GM10248 (cell line): ENCODE measurements at regions of chr2 and their contacts with region 1.

Region 1: GRCh38 chr2:105369747-105370690 is 28.8 kb downstream of the FHL2 start:
- DNase-seq: peak; percentile 81
- CTCF ChIP-seq: peak; percentile 95

Region 2: DNA sequence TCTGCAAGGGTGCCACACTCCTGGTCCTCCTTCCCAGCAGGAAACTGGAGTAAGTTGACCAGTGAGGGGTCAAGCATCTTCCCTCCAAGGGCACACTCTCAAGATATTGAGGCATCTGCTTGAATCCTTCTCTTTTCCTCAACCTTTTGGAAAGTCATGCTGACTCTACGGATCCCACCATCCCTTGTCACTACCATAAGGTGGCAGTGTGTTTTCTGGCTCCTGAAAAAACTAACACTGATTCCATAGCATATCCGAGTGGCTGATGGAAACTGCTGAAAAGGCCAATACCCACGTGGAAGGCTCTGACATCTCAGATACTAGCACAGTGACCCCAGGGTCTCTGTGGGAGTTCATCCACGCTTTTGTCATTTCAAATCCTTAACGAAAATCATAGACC is 91.4 kb before region 1 on chr2:
- CTCF ChIA-PET with region 1: no interaction called
- POLR2A ChIA-PET with region 1: no interaction called
- DNase-seq: no peak
- CTCF ChIP-seq: no peak

Region 3: DNA sequence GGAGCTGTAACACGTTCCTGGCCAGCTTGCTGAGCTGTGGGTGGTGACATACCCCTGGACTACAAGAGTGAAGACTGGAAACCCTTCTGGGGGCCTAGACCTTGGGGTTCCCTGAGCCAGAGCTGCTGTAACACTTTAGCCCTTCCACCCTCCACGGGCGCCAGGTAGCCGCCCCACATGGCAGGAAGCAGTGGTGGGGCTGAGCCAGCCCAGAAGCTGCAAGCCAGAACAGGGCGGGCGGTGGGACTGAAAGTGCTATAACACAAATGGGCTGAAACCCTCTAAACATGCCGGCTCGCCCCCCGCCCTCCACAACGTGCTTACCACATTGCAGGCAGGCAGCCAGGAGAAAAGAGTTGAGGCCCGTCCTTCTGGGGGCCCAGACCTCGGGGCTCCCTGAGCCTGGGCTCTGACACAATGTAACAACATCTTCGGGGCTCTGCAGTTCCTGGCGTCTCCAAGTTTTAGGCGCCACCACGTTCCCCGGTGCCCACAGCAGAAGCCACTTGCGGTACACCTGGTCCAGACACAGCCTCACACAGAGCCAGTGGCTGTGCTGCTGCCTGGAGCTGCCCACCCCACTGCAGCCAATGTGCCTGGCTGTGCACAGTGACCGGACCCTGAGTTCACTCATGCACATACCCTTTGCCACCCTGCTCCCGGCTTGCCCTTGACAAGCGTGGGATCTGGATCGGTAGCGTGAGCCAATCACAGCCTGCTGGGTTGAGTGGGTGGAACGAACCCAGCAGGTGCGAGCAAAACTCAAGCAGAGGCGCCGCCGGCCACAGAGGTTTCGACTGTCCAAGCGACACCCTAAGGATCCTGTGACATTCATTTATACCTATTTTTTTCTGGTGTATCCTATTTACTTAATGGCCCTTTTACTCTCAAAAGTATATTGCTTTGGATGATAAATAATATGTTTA is 156.2 kb after region 1 on chr2:
- CTCF ChIA-PET with region 1: interaction called, 56 read pairs
- POLR2A ChIA-PET with region 1: no interaction called
- DNase-seq: no peak
- CTCF ChIP-seq: no peak

Region 4: GRCh38 chr2:105545730-105546627 is 176.0 kb after region 1 on chr2:
- CTCF ChIA-PET with region 1: interaction called, 20 read pairs
- POLR2A ChIA-PET with region 1: no interaction called
- DNase-seq: peak; percentile 75
- CTCF ChIP-seq: peak; percentile 63